ENCODE measurements at regions of chr1 and their contacts with region 1.

Region 1: DNA sequence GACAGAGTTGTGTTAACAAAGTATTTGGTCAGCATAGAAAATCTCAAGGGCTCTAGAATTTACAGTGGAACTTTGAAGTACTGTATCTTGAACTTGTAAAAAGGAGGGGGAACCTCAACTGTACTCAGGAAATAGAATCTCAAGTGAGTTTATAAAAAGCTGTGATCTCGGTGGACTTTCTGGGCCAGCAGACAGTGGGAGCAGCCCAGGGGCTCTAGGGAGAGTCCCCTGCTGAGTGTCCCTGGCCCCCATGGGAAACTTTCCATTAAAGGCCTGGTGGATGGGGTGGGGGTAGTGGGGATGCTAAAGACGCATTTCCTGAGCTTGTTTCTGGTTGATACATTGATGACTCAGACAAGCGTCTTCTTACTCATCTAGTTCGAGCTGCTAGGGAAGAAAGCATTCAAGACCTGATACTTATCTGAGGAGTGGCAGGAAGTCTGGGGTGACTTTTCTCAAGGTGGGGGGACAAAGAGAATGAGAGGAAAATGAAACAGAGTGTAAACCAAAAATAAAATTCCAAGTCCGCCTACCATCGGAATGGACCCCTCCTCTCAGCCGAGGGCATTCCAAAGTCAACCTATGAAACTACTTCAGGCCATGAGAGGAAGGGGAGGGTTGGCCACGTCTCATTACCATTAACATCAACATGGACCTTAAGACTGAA is 65.5 kb downstream of the NID1 start:
- DNase-seq: peak; percentile 83
- H3K4me3 Mint-ChIP-seq: peak overlapping the region; percentile 53
- H3K27ac Mint-ChIP-seq: peak overlapping the region; percentile 89
- H3K4me1 Mint-ChIP-seq: peaks cover 53% of the 10 kb centered on the region
- H3K27me3 Mint-ChIP-seq: no peaks in the 10 kb centered on the region

Region 2: DNA sequence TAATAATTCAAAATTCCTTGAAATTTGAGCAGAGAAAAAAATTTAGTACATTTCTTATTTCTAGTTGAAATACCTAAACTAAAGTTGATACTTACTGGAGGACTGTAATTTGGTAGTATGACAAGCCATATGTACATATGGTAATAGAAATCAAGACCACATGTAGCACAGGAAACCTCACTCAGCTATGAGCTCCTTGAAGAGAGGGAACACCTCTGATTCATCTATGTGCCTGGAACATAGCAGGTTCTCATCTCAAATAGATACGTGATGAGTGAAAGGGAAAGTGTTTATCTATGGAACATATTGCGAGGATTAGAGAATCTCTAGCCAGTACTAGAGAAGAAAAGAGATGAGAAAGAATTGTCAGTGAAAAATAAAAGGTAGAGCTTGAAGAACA is 301.9 kb before region 1 on chr1:
- CTCF ChIA-PET with region 1: no interaction called
- POLR2A ChIA-PET with region 1: no interaction called
- intact Hi-C with region 1: loop called (anchors 2 kb)
- DNase-seq: no peak
- H3K4me3 Mint-ChIP-seq: no peak overlapping the region
- H3K27ac Mint-ChIP-seq: peak overlapping the region; percentile 58
- H3K4me1 Mint-ChIP-seq: peaks cover 16% of the 10 kb centered on the region
- H3K27me3 Mint-ChIP-seq: no peaks in the 10 kb centered on the region

Region 3: DNA sequence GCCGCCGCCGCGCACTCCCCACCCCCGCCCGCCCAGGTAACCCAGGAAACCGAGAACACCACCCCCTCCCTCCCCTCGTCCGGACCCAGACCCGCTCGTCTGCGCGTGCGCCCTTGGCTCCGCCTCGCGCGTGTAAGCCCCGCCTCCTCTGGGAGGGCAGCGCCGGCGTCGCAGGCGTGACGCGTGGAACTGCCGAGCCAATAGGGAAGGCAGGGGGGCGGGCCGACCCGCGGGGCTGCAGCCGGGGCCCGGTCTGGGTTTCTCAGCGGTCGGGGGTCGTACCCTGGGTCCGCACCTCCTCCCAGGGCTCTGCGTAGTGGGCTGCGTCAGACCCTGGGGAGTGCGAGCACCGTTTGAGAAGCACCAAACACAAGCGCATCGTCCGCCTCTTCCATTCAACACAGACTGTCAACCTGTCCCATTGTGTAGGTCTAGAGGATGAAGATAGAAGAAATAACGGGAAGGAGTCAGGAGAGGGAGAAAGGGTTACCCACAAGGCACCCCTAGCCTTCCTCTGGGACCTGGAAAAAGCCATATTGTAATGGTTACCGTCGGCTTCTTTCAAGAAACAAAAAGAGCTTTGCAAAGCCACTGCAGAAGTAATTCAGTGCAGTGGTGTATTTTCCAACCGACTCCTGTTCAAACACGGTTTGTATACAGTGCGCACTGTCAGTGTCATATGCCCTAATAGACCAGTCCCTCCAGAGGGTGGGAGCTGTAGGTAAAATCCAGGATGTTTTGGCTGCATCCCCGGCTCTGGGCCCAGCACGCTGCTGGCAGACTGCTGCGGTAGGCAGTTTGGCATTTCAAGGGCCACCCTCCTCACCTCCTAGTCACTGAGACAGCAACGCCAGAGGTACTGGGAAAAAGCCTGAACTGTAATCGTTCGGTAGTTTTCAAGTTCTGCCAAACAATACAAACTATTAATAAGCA is 132.2 kb before region 1 on chr1:
- CTCF ChIA-PET with region 1: no interaction called
- POLR2A ChIA-PET with region 1: interaction called, 3 read pairs
- intact Hi-C with region 1: loop called (anchors 1 kb)
- DNase-seq: peak; percentile 98
- H3K4me3 Mint-ChIP-seq: peak overlapping the region; percentile 89
- H3K27ac Mint-ChIP-seq: peak overlapping the region; percentile 98
- H3K4me1 Mint-ChIP-seq: peaks cover 45% of the 10 kb centered on the region
- H3K27me3 Mint-ChIP-seq: no peaks in the 10 kb centered on the region

Region 4: DNA sequence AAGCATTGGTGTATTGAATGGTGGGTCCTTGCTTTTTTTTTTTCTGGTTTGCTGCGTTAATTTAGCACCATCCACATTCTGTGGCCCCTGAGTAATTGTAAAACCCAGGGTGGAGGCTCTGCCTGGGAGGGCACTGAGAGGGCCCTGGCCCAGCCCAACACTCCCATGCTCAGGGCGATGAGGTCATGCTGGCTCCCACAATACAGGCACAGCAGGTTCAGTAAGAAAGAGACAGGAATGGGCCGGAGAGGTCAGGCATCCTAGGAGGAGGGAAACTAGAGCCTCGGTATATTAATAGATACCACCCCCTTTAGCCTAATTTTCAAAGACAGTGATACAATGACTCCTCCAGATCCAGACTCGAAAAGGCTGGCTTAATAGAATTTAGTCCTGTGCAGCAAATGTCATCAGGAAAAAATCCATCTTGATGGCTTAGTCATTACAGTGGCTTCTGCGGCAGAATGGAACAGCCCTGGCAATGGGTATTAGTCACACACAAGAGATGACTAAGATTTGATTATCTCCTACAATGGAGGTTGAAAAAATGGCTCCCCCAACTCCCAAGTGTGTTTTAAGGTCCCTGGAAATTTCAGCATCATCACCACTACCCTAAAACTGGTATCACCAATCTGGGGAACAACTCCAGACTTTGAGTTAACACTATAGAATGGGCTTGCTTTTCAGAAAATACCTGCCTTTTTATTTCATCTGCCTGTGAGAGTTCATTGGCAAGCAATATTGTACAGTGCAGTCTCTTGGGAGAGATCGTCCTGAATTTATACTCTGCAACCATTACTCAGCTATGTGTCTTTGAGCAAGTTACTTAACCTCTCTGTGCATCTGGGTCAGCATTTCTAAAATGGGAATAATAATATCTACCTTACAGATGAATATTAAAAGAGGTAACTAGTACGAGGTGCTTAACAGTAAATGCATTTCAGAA is 88.8 kb before region 1 on chr1:
- CTCF ChIA-PET with region 1: no interaction called
- POLR2A ChIA-PET with region 1: no interaction called
- intact Hi-C with region 1: loop called (anchors 1 kb)
- DNase-seq: peak; percentile 73
- H3K4me3 Mint-ChIP-seq: no peak overlapping the region
- H3K27ac Mint-ChIP-seq: peak overlapping the region; percentile 44
- H3K4me1 Mint-ChIP-seq: peaks cover 23% of the 10 kb centered on the region
- H3K27me3 Mint-ChIP-seq: no peaks in the 10 kb centered on the region

Region 5: GRCh38 chr1:236066828-236067386 is 67.5 kb after region 1 on chr1:
- CTCF ChIA-PET with region 1: interaction called, 3 read pairs
- POLR2A ChIA-PET with region 1: interaction called, 3 read pairs
- intact Hi-C with region 1: loop called (anchors 2 kb)
- DNase-seq: peak; percentile 87
- H3K4me3 Mint-ChIP-seq: no peak overlapping the region
- H3K27ac Mint-ChIP-seq: peak overlapping the region; percentile 2
- H3K4me1 Mint-ChIP-seq: peaks cover 20% of the 10 kb centered on the region
- H3K27me3 Mint-ChIP-seq: peaks cover 24% of the 10 kb centered on the region

Measured in activated CD4-positive, alpha-beta memory T cell treated with anti-CD3 and anti-CD28 coated beads for 36 hours (primary cell).